GM12878 (cell line): ENCODE measurements at regions of chr15 and their contacts with region 1.

Region 1: GRCh38 chr15:64460206-64460734 is at the start of gene ZNF609:
- DNase-seq: no peak
- ATAC-seq: peak; percentile 63
- H3K4me3 ChIP-seq: peak within 1 kb of the TSS; percentile 78
- H3K27ac ChIP-seq: peak within 1 kb of the TSS; percentile 92
- H3K4me1 ChIP-seq: peaks cover 50% of the 10 kb centered on the region
- H3K27me3 ChIP-seq: no peaks in the 10 kb centered on the region
- CTCF ChIP-seq: 0 out of 6 replicates have a peak, but pooled peaks of 1 of the 3 experiments have one; percentile 4
- EP300 ChIP-seq: no peak
- POLR2A ChIP-seq: peak; percentile 72
- RAD21 ChIP-seq: peak; percentile 27; the same call in 1 of the 2 replicates
- polyA plus RNA-seq, gene ZNF609: 5.1 to 7.4 TPM

Region 2: GRCh38 chr15:64387562-64388168 is 72.6 kb before region 1 on chr15 and contains the start of gene TRIP4:
- CTCF ChIA-PET with region 1: no interaction called
- POLR2A ChIA-PET with region 1: interaction called, 4 read pairs
- RAD21 ChIA-PET with region 1: interaction called, 4 read pairs
- SMC1A ChIA-PET with region 1: interaction called, 3 read pairs
- in situ Hi-C with region 1: no loop called
- intact Hi-C with region 1: loop called (anchors 5 kb)
- DNase-seq: peak; percentile 92
- ATAC-seq: peak; percentile 100
- H3K4me3 ChIP-seq: peak within 1 kb of the TSS; percentile 92
- H3K27ac ChIP-seq: peak within 1 kb of the TSS; percentile 71
- H3K4me1 ChIP-seq: no peaks in the 10 kb centered on the region
- H3K27me3 ChIP-seq: no peaks in the 10 kb centered on the region
- CTCF ChIP-seq: no peak; a peak in 1 of 6 replicates
- EP300 ChIP-seq: 0 out of 4 replicates have a peak, but pooled peaks of 1 of the 2 experiments have one; percentile 11
- POLR2A ChIP-seq: peak; percentile 97
- RAD21 ChIP-seq: peak; percentile 51; the same call in 1 of the 2 replicates
- polyA plus RNA-seq, gene TRIP4: 20.0 to 23.8 TPM

Region 3: DNA sequence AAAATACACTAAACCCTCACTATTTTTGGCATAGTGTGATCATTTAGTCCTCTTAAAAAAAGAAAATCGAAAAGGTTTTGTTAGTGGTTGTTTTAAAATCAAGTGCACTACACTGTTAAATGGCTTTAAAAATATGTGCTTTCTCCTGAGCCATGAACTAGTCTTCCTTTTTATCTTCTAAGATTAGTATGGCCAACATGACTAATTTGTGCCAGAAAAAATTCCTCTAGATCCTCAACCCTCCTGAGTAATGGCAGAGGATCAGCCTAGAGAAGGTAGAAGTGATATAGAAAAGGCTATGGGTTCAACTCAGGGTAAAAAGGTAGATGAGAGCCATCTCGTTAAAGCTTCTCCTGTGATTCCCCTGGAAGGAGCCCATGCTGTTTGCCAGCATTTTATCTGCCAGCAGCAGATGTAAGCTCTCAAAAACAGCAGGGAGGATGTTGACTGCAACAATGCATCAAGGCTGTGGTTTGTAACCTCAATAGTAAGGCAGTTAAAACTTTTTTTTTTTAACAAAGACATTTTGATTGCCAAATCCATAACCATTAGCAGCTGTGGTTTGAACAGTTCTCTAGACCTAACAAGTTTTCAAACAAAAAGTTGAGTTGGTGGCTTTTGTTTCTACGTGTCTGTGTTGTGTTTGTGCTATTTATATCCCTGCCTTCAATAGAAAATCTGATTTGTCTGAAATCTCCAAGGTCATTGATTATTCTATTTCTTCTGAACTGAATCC is 30.1 kb before region 1 on chr15:
- CTCF ChIA-PET with region 1: interaction called, 7 read pairs
- POLR2A ChIA-PET with region 1: interaction called, 5 read pairs
- RAD21 ChIA-PET with region 1: interaction called, 8 read pairs
- SMC1A ChIA-PET with region 1: interaction called, 8 read pairs
- in situ Hi-C with region 1: no loop called
- intact Hi-C with region 1: loop called (anchors 2 kb)
- DNase-seq: peak; percentile 65
- ATAC-seq: peak; percentile 87
- H3K4me3 ChIP-seq: 0 out of 2 replicates have a peak overlapping the region, but pooled peaks have one; percentile 6
- H3K27ac ChIP-seq: peak overlapping the region; percentile 87
- H3K4me1 ChIP-seq: peaks cover 19% of the 10 kb centered on the region
- H3K27me3 ChIP-seq: no peaks in the 10 kb centered on the region
- CTCF ChIP-seq: no peak
- EP300 ChIP-seq: peak in 1 of 2 experiments; percentile 55; a peak in 2 of 4 replicates
- POLR2A ChIP-seq: no peak
- RAD21 ChIP-seq: no peak

Region 4: GRCh38 chr15:64443747-64444621 is 16.3 kb before region 1 on chr15:
- CTCF ChIA-PET with region 1: interaction called, 4 read pairs
- POLR2A ChIA-PET with region 1: interaction called, 13 read pairs
- RAD21 ChIA-PET with region 1: interaction called, 10 read pairs
- SMC1A ChIA-PET with region 1: interaction called, 24 read pairs
- in situ Hi-C with region 1: no loop called
- intact Hi-C with region 1: no loop called
- DNase-seq: no peak
- ATAC-seq: peak; percentile 78
- H3K4me3 ChIP-seq: peak overlapping the region; percentile 34; the same call in 1 of the 2 replicates
- H3K27ac ChIP-seq: peak overlapping the region; percentile 81
- H3K4me1 ChIP-seq: peaks cover 38% of the 10 kb centered on the region
- H3K27me3 ChIP-seq: no peaks in the 10 kb centered on the region
- CTCF ChIP-seq: no peak
- EP300 ChIP-seq: peak in 1 of 2 experiments; percentile 56; a peak in 1 of 4 replicates
- POLR2A ChIP-seq: no peak
- RAD21 ChIP-seq: 0 out of 2 replicates have a peak, but pooled peaks have one; percentile 20

Region 5: DNA sequence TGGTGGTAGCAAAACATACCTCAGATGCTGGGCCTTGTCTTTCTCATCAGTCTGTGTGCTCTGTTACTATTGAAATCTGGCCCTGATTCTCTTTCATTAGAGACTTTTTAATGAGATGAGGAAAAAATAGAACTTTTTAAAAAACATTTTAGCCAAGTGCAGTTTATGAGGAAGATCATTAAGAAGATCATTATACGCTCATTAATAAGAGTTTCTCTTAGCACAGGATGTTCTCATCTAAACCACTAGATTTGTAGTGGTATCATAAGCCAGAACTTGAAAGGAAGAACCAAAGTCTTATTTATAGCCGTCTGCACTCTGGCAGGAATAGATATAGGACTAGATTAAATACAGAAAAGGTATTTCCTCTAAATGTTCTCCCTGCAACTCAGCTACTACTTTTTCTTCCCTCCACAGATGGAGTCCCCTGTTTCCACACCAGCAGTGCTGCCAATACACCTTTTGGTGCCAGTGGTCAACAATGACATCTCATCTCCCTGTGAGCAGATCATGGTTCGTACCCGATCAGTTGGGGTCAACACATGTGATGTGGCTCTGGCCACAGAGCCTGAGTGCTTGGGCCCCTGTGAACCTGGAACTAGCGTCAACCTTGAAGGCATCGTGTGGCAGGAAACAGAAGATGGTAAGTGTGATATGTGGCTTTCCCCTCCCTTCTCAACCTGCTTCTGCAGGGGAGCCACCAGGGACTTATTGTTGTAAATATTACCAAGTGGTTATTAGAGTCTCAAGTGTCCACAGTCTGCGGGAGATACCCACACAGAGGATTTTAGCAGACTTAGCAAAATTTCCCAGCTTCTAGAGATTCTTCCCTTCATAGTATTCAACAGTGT is 162.4 kb after region 1 on chr15:
- CTCF ChIA-PET with region 1: no interaction called
- POLR2A ChIA-PET with region 1: interaction called, 3 read pairs
- RAD21 ChIA-PET with region 1: interaction called, 3 read pairs
- SMC1A ChIA-PET with region 1: interaction called, 4 read pairs
- in situ Hi-C with region 1: no loop called
- intact Hi-C with region 1: loop called (anchors 5 kb)
- DNase-seq: peak; percentile 96
- ATAC-seq: peak; percentile 93
- H3K4me3 ChIP-seq: no peak overlapping the region
- H3K27ac ChIP-seq: peak overlapping the region; percentile 90
- H3K4me1 ChIP-seq: peaks cover 55% of the 10 kb centered on the region
- H3K27me3 ChIP-seq: no peaks in the 10 kb centered on the region
- CTCF ChIP-seq: no peak
- EP300 ChIP-seq: peak; percentile 69 to 74
- POLR2A ChIP-seq: no peak
- RAD21 ChIP-seq: no peak